Ovary (tissue), 10 donors: ENCODE measurements at regions of chr13 and their contacts with region 1.

Region 1: GRCh38 chr13:97221989-97222700 is at the start of gene MBNL2:
- DNase-seq: peak; percentile 83 to 89 (median 85)
- H3K4me3 ChIP-seq: peak within 1 kb of the TSS; percentile 60
- H3K27ac ChIP-seq: peak within 1 kb of the TSS; percentile 54 to 85
- H3K4me1 ChIP-seq: peaks cover 7% of the 10 kb centered on the region
- H3K27me3 ChIP-seq: no peaks in the 10 kb centered on the region
- CTCF ChIP-seq: no peak
- EP300 ChIP-seq: peak; percentile 40
- POLR2A ChIP-seq: peak; percentile 77
- total RNA-seq, gene MBNL2: 65.5 to 110 (median 97.8) TPM

Region 2: GRCh38 chr13:97344265-97345175 is 122.4 kb after region 1 on chr13:
- intact Hi-C with region 1: loop called in 2 of 4 experiments (anchors 5 kb)
- DNase-seq: peak; percentile 35 to 74 (median 62)
- H3K4me3 ChIP-seq: no peak overlapping the region
- H3K27ac ChIP-seq: no peak overlapping the region
- H3K4me1 ChIP-seq: peaks cover 4% of the 10 kb centered on the region
- H3K27me3 ChIP-seq: no peaks in the 10 kb centered on the region
- CTCF ChIP-seq: peak in 2 of 3 donors; percentile 55 to 58
- EP300 ChIP-seq: no peak
- POLR2A ChIP-seq: no peak

Region 3: GRCh38 chr13:97432917-97433726 is 211.0 kb after region 1 on chr13:
- intact Hi-C with region 1: loop called in 1 of 4 experiments (anchors 10 kb)
- DNase-seq: peak; percentile 97 to 100 (median 98)
- H3K4me3 ChIP-seq: peak overlapping the region; percentile 97
- H3K27ac ChIP-seq: peak overlapping the region; percentile 92 to 99
- H3K4me1 ChIP-seq: peaks cover 1% of the 10 kb centered on the region
- H3K27me3 ChIP-seq: no peaks in the 10 kb centered on the region
- CTCF ChIP-seq: no peak
- EP300 ChIP-seq: no peak
- POLR2A ChIP-seq: peak; percentile 26

Region 4: DNA sequence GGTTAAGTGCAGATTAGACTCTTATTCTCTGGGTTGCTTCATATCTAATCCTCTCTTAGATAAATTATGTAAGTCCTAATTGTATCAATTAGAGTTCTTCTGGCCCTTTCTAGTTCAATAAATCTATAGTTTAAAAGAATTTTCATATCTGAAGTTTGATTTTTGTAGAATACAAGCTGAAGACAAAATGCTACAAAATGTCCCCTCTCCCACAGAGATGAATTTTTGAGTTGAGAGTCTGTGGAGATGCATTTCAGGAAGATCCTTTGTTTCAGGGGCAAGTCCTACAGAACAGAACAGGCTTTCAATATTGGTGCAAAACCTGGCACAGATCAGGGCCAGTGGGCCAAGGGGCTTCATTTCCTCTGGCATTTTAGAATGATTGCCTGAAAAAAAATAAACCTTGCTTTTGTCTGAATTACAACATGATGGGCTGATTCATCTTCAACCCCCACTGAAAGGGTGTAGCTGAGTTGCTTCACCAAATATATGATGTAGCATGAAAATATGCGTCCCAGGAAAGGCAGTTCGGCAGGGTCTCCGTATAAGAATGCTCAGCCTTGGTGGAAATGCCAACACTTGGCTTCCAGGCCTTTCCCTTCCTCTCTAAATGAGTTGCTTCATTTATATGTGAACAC is 724.9 kb after region 1 on chr13:
- intact Hi-C with region 1: no loop called
- DNase-seq: no peak
- H3K4me3 ChIP-seq: no peak overlapping the region
- H3K27ac ChIP-seq: no peak overlapping the region
- H3K4me1 ChIP-seq: no peaks in the 10 kb centered on the region
- H3K27me3 ChIP-seq: no peaks in the 10 kb centered on the region
- CTCF ChIP-seq: no peak
- EP300 ChIP-seq: no peak
- POLR2A ChIP-seq: no peak